GM10248 (cell line): ENCODE measurements at regions of chr17 and their contacts with region 1.

Region 1: DNA sequence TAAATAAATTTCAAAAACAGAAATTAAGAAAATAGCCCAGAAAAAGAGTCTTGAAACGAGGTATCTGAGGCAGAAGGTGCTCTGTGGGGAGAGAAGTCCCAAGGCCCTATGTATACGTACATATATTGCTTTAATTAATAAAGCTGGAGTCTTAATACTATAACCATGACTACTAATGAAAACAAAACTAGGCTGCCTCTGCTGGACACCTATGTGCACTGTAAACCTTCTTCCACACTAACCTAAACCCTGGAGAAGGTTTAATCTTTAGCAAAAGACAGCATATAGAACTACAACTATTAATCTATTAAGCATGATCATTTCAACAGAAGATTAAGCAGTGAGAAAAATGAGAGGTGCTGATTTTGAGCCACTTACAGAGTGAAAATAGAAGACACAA is 153.9 kb upstream of the C17orf78 start:
- DNase-seq: no peak
- CTCF ChIP-seq: no peak

Region 2: GRCh38 chr17:37211136-37211535 is 10.7 kb before region 1 on chr17:
- CTCF ChIA-PET with region 1: interaction called, 10 read pairs
- POLR2A ChIA-PET with region 1: no interaction called
- DNase-seq: no peak
- CTCF ChIP-seq: no peak

Region 3: DNA sequence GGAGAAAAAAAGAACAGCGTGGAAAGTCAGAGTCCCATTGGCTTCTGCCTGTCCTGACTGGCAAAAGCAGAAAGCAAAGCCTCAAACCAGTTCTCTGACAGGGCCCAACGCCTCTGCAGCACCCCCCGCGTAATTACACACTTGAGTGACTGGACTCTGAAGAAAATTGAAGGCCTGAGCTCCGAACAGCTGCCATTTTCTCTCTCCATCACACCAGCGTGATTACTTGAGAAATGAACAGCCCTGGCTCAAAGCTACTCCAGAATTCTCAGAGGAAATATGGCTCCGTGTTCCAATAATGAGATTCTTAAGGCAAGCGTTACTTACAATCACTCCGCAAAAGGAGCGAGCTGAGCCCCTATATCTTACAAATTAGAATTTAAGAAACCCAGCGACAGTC is 11.2 kb after region 1 on chr17:
- CTCF ChIA-PET with region 1: interaction called, 32 read pairs
- POLR2A ChIA-PET with region 1: no interaction called
- DNase-seq: no peak
- CTCF ChIP-seq: no peak

Region 4: DNA sequence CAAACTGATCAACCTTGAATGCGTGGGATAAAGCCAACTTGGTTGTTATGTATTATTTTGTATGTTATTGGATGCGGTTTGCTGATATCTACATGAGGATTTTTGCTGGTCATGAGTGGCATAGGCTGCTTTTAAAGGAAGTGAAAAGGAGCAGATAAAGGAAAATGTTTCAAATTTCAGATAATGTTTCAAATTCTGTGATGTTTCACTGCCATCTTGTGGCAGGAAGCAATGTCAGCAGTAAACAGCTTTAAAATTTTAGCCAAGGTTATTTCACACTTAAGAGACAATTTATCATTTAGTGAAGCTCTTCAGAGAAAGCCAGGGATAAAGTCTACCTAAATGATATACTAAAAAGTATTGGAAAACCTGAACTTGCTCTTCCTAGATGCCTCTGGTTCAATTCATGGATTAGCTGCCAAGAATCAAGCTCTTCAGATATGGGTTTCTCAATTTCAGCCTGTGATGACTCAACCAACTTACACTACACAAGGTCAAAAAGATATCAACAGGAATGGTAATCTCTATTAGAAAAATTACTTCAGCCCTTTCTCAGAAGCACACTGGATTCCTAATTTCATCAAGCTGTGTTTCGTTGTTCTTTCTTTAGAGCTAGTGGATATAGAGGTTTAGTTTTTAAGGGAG is 17.9 kb after region 1 on chr17:
- CTCF ChIA-PET with region 1: interaction called, 32 read pairs
- POLR2A ChIA-PET with region 1: no interaction called
- DNase-seq: peak; percentile 28
- CTCF ChIP-seq: peak; percentile 77

Region 5: DNA sequence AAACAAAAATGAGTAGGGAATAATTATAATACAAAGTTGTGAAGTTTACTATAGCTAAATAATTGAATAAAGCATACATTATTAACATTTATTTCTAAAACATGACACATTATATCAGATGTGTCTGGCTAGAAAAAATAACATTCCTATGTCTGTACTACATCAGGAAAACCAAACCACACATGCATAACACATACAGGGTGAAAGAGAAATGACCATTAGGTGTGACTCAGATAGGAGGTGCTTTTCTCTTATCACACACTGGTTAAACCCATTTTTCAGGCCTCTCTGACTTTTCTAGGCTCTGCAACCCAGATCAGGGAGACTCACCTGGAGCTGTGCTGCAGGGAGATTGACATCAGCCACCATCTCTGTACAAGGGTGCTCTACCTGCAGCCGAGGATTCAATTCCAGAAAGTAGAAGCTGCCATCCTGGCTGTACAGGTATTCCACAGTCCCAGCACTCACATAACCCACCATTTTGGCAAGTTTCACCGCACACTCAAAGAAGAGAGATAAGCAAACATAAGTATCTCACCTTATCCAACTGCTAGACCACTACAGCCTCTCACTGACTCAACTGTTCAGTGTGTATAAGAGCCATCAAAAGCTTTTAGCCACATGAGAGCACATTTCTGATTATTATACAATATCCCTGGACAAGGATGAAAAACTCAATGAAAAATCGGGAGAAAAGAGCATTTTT is 37.3 kb after region 1 on chr17:
- CTCF ChIA-PET with region 1: no interaction called
- POLR2A ChIA-PET with region 1: no interaction called
- DNase-seq: no peak
- CTCF ChIP-seq: no peak